OCI-LY7 (cell line): ENCODE measurements at regions of chr15 and their contacts with region 1.

Region 1: GRCh38 chr15:80455668-80456442 is 51.7 kb downstream of the ARNT2 start:
- DNase-seq: peak; percentile 61
- H3K4me3 ChIP-seq: no peak overlapping the region
- H3K27ac ChIP-seq: no peak overlapping the region
- H3K4me1 ChIP-seq: no peaks in the 10 kb centered on the region
- CTCF ChIP-seq: peak; percentile 95

Region 2: DNA sequence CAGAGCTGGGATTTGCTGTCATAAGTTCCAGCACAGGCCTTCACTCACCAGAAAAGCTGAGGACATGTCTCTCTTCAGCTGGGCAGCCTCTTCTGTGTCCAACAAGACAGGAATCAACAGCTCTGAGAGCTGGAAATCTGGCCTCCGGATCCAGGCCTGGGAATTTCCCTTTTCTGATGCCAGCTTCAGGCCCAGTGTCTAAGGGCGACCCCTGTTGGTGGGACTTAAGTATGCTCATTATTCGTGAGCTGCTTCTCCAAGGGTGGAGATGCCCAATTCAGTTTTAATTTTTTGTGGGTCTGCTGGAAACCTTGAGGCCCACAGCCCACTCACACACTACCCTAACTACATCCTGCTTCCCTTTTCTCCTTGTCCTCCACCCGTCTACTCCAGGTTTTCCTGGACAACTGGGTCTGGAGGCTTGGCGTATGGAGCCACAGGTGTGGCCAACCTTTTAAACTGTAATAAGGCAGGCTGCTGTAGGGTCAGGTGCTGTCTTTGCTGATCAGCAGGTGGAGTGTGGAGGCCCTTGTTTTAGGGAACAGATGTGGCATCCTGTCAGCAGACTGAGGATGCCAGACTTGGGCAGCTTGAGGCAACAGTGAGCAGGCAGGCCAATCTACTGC is 320.7 kb after region 1 on chr15:
- CTCF ChIA-PET with region 1: interaction called, 3 read pairs
- POLR2A ChIA-PET with region 1: no interaction called
- intact Hi-C with region 1: loop called (anchors 2 kb)
- DNase-seq: peak; percentile 51
- H3K4me3 ChIP-seq: no peak overlapping the region
- H3K27ac ChIP-seq: no peak overlapping the region
- H3K4me1 ChIP-seq: no peaks in the 10 kb centered on the region
- CTCF ChIP-seq: peak; percentile 91

Region 3: GRCh38 chr15:80970018-80970658 is 514.3 kb after region 1 on chr15:
- CTCF ChIA-PET with region 1: interaction called, 3 read pairs
- POLR2A ChIA-PET with region 1: no interaction called
- intact Hi-C with region 1: loop called (anchors 1 kb)
- DNase-seq: peak; percentile 64
- H3K4me3 ChIP-seq: no peak overlapping the region
- H3K27ac ChIP-seq: no peak overlapping the region
- H3K4me1 ChIP-seq: no peaks in the 10 kb centered on the region
- CTCF ChIP-seq: peak; percentile 95